SK-N-SH (cell line): ENCODE measurements at regions of chr11 and their contacts with region 1.

Region 1: GRCh38 chr11:2532704-2533586 is 88.1 kb downstream of the KCNQ1 start:
- DNase-seq: peak; percentile 90
- H3K4me3 ChIP-seq: peak overlapping the region in 1 of 2 experiments; percentile 34; a peak in 1 of 4 replicates
- H3K27ac ChIP-seq: peak overlapping the region in 1 of 2 experiments; percentile 62; a peak in 2 of 4 replicates
- H3K4me1 ChIP-seq: peaks cover 5 to 9% of the 10 kb centered on the region in 2 experiments; a peak in 2 of 4 replicates
- H3K27me3 ChIP-seq: no peaks in the 10 kb centered on the region
- CTCF ChIP-seq: peak; percentile 98
- EP300 ChIP-seq: no peak
- RAD21 ChIP-seq: peak; percentile 97

Region 2: GRCh38 chr11:2409611-2410468 is 123.1 kb before region 1 on chr11:
- CTCF ChIA-PET with region 1: interaction called, 21 read pairs
- POLR2A ChIA-PET with region 1: no interaction called
- DNase-seq: no peak
- H3K4me3 ChIP-seq: no peak overlapping the region
- H3K27ac ChIP-seq: no peak overlapping the region
- H3K4me1 ChIP-seq: no peaks in the 10 kb centered on the region
- H3K27me3 ChIP-seq: no peaks in the 10 kb centered on the region
- CTCF ChIP-seq: no peak
- EP300 ChIP-seq: no peak
- RAD21 ChIP-seq: no peak

Region 3: GRCh38 chr11:2489083-2489482 is 43.9 kb before region 1 on chr11:
- CTCF ChIA-PET with region 1: interaction called, 23 read pairs
- POLR2A ChIA-PET with region 1: no interaction called
- DNase-seq: no peak
- H3K4me3 ChIP-seq: no peak overlapping the region
- H3K27ac ChIP-seq: no peak overlapping the region
- H3K4me1 ChIP-seq: no peaks in the 10 kb centered on the region
- H3K27me3 ChIP-seq: no peaks in the 10 kb centered on the region
- CTCF ChIP-seq: no peak
- EP300 ChIP-seq: no peak
- RAD21 ChIP-seq: no peak

Region 4: DNA sequence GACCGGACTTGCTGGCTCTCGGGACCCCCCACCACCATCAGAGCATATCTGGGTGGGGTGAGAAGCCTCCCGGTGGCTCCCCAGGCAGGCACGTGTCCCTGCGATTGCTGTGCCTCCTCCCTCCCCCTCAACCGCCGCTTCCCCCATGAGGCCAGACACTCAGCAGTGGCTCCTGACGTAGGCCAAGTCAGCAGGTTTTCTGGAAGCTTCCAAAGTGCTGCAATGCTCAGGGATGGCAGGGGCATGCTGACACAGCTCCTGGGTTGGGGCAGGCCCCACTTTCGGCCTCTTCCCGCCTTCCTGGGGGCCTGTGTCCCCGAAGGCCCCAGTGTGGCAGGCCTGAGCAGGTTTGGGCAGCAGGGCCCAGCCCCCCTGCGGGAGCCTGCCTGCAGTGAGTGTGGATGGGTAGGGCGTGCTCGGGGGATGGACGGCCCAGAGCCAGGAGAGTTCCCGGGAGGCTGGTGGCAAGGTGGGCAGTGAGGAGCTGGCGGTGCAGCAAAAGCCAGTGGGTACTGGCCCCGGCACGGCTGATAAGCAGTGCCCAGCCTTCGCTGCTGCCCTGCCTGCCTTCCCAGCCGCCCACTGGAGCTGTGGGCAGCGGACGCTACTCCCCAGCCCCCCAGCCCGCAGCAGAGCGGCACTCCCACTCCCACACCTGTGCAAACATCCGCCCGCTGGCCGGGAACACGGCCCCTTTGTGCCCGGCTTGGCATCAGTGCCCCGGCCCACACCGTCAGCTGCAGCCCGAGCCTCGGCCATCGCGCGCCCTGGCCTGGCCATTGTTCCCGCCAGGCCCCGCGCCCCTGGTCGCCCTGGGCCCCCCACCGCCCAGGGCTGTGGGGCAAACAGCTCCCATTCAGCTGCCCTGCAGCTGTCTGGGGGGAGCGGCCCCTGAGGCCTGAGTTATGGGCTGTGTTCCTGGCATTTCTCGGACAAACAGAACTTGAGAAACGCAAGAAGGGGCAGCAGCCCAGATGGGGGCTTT is 41.9 kb after region 1 on chr11:
- CTCF ChIA-PET with region 1: interaction called, 24 read pairs
- POLR2A ChIA-PET with region 1: no interaction called
- DNase-seq: no peak
- H3K4me3 ChIP-seq: no peak overlapping the region
- H3K27ac ChIP-seq: no peak overlapping the region
- H3K4me1 ChIP-seq: peaks cover 0 to 12% of the 10 kb centered on the region in 2 experiments; a peak in 1 of 4 replicates
- H3K27me3 ChIP-seq: no peaks in the 10 kb centered on the region
- CTCF ChIP-seq: no peak
- EP300 ChIP-seq: no peak
- RAD21 ChIP-seq: no peak

Region 5: GRCh38 chr11:2599561-2600182 is 66.7 kb after region 1 on chr11:
- CTCF ChIA-PET with region 1: no interaction called
- POLR2A ChIA-PET with region 1: no interaction called
- DNase-seq: no peak
- H3K4me3 ChIP-seq: no peak overlapping the region
- H3K27ac ChIP-seq: no peak overlapping the region
- H3K4me1 ChIP-seq: no peaks in the 10 kb centered on the region
- H3K27me3 ChIP-seq: no peaks in the 10 kb centered on the region
- CTCF ChIP-seq: no peak
- EP300 ChIP-seq: no peak
- RAD21 ChIP-seq: no peak

Region 6: GRCh38 chr11:2621894-2622293 is 88.9 kb after region 1 on chr11:
- CTCF ChIA-PET with region 1: no interaction called
- POLR2A ChIA-PET with region 1: no interaction called
- DNase-seq: no peak
- H3K4me3 ChIP-seq: no peak overlapping the region
- H3K27ac ChIP-seq: no peak overlapping the region
- H3K4me1 ChIP-seq: no peaks in the 10 kb centered on the region
- H3K27me3 ChIP-seq: no peaks in the 10 kb centered on the region
- CTCF ChIP-seq: no peak
- EP300 ChIP-seq: no peak
- RAD21 ChIP-seq: no peak

Region 7: DNA sequence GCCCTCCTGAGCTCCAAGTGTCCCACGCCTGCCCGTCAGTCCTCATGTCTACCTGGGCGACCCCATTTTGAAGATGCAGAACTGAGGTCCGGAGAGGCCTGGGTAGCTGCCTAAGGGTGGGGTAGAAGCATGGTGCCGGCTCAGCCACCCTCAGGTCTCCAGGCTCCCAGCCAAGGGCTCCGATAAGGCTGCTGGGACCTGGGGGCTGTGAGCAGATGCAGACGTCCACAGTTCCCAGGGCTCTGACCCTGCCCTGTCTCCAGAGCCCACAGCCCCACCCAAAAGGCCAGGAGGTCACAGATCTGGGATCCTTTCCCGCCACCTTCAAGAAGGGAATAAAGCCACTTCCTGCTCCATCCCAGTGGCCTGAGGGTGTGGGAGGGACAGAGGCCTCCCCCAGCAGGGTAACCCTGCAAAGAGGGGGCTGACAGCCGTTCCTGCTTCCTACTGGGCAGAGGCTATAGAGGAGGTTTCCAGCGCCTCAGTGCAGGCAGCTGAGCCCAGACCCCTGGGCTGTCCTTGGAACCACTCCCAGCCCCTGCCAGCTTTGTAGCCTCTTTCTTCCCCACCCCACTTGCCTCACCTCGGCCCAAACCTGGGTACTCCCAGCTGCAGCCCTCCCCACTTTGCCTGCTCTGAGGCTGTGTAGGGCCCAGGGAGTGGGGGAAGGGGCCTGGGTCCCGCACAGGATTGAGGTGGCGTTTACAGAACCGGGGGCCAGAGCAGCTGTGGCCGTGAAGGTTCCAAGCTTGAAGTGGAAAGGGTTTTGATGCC is 267.1 kb after region 1 on chr11:
- CTCF ChIA-PET with region 1: interaction called, 16 read pairs
- POLR2A ChIA-PET with region 1: no interaction called
- DNase-seq: no peak
- H3K4me3 ChIP-seq: no peak overlapping the region
- H3K27ac ChIP-seq: no peak overlapping the region
- H3K4me1 ChIP-seq: peaks cover 0 to 2% of the 10 kb centered on the region in 2 experiments; a peak in 1 of 4 replicates
- H3K27me3 ChIP-seq: no peaks in the 10 kb centered on the region
- CTCF ChIP-seq: no peak
- EP300 ChIP-seq: no peak
- RAD21 ChIP-seq: no peak

Region 8: DNA sequence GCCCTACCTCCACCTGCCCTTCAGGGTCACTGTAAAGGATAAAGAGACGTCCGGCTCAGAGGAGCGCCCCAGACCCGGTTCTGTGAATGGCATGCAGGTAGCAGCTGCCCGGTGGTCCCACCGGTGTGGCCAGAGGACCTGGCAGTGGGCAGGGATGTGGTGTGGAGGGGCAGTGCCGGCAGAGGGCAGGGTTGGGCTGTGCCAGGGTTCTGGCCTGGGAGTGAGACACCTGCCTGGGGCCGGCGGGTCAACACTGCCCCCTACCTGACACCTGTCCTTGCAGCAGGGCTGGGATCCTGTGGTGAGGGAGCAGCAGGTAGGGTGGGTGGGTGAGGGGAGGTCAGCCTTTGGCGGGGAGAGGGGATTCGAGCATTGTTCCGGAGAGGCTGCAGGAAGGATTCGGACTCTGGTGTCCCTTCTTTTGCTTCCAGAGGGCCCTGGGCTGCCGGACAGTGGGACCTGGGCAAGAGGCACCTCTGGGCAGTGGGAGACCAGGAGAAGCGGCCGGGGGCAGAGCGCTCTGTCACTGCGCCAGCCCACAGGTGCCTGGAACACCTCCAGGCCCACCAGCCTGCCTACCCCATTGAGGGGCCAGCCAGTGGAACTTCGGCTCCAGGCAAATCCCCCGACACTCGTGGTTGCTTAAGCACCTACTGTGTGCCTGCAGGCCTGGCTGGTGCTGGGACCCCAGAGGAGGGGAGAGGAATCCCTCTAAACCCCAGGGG is 397.9 kb after region 1 on chr11:
- CTCF ChIA-PET with region 1: interaction called, 18 read pairs
- POLR2A ChIA-PET with region 1: no interaction called
- DNase-seq: peak; percentile 84
- H3K4me3 ChIP-seq: peak overlapping the region; percentile 46 to 66; a peak in 3 of 4 replicates
- H3K27ac ChIP-seq: peak overlapping the region in 1 of 2 experiments; percentile 60; a peak in 1 of 4 replicates
- H3K4me1 ChIP-seq: peaks cover 0 to 14% of the 10 kb centered on the region in 2 experiments; a peak in 2 of 4 replicates
- H3K27me3 ChIP-seq: no peaks in the 10 kb centered on the region
- CTCF ChIP-seq: peak; percentile 55
- EP300 ChIP-seq: no peak
- RAD21 ChIP-seq: peak; percentile 69